ENCODE measurements at regions of chr3 and their contacts with region 1.

Region 1: GRCh38 chr3:190883973-190884832 is 21.7 kb upstream of the GMNC start:
- DNase-seq: peak; percentile 17
- H3K4me3 ChIP-seq: no peak overlapping the region
- CTCF ChIP-seq: peak; percentile 77

Region 2: GRCh38 chr3:190862209-190863118 is 21.7 kb before region 1 on chr3 and contains the start of gene GMNC:
- CTCF ChIA-PET with region 1: interaction called, 17 read pairs
- POLR2A ChIA-PET with region 1: no interaction called
- DNase-seq: no peak
- H3K4me3 ChIP-seq: peak within 1 kb of the TSS; percentile 60
- CTCF ChIP-seq: no peak

Region 3: GRCh38 chr3:190870127-190870526 is 14.1 kb before region 1 on chr3:
- CTCF ChIA-PET with region 1: interaction called, 19 read pairs
- POLR2A ChIA-PET with region 1: no interaction called
- DNase-seq: no peak
- H3K4me3 ChIP-seq: no peak overlapping the region
- CTCF ChIP-seq: no peak

Region 4: GRCh38 chr3:190996181-190996775 is 112.1 kb after region 1 on chr3:
- CTCF ChIA-PET with region 1: no interaction called
- POLR2A ChIA-PET with region 1: no interaction called
- DNase-seq: no peak
- H3K4me3 ChIP-seq: no peak overlapping the region
- CTCF ChIP-seq: no peak

Region 5: DNA sequence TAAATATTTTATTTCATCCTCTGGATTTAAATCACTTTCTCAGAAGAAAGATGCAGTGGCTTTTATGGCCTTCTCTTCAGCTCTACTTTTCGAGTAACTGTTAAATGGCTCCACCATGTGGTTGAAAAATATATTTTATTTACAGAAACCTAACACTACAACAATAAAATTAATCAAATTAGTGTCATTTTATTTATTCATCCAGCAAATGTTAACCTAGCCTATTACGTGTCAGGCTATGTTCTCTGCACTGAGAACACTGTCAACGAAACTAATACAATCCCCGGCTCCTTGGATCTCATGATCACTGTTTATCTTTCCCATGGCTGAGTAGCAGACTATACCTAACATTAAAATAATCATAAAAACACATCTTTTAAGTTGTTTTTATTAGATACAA is 166.8 kb after region 1 on chr3:
- CTCF ChIA-PET with region 1: interaction called, 140 read pairs
- POLR2A ChIA-PET with region 1: no interaction called
- DNase-seq: no peak
- H3K4me3 ChIP-seq: no peak overlapping the region
- CTCF ChIP-seq: peak; percentile 8